Colonic mucosa (tissue), 4 donors: ENCODE measurements at regions of chr22 and their contacts with region 1.

Region 1: GRCh38 chr22:35930933-35931332 is 97.7 kb downstream of the RBFOX2 start:
- DNase-seq: no peak
- H3K4me3 ChIP-seq: no peak overlapping the region
- H3K27ac ChIP-seq: no peak overlapping the region
- H3K4me1 ChIP-seq: no peaks in the 10 kb centered on the region
- H3K27me3 ChIP-seq: no peaks in the 10 kb centered on the region
- CTCF ChIP-seq: peak; percentile 34

Region 2: GRCh38 chr22:35777335-35777975 is 153.5 kb before region 1 on chr22:
- intact Hi-C with region 1: no loop called
- DNase-seq: no peak
- H3K4me3 ChIP-seq: no peak overlapping the region
- H3K27ac ChIP-seq: no peak overlapping the region
- H3K4me1 ChIP-seq: no peaks in the 10 kb centered on the region
- H3K27me3 ChIP-seq: no peaks in the 10 kb centered on the region
- CTCF ChIP-seq: no peak

Region 3: DNA sequence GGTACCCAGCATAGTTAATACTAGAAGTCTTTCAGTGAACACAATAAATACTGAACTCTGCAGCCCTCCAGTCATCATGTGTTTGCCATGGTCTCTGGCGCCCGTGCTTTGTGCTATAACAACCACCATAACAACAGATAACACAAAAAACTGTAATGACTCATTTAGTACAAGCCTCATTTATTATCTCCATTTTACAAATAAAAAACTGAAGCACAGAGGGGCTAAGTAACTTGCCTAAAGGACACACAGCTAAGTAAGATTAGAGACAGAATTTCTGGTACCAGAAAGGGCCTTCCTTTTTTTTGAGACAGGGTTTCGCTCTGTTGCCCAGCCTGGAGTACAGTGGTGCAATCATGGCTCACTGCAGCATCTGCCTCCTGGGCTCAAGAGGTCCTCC is 78.2 kb after region 1 on chr22:
- intact Hi-C with region 1: loop called (anchors 10 kb)
- DNase-seq: no peak
- H3K4me3 ChIP-seq: no peak overlapping the region
- H3K27ac ChIP-seq: no peak overlapping the region
- H3K4me1 ChIP-seq: peaks cover 3% of the 10 kb centered on the region
- H3K27me3 ChIP-seq: no peaks in the 10 kb centered on the region
- CTCF ChIP-seq: no peak

Region 4: DNA sequence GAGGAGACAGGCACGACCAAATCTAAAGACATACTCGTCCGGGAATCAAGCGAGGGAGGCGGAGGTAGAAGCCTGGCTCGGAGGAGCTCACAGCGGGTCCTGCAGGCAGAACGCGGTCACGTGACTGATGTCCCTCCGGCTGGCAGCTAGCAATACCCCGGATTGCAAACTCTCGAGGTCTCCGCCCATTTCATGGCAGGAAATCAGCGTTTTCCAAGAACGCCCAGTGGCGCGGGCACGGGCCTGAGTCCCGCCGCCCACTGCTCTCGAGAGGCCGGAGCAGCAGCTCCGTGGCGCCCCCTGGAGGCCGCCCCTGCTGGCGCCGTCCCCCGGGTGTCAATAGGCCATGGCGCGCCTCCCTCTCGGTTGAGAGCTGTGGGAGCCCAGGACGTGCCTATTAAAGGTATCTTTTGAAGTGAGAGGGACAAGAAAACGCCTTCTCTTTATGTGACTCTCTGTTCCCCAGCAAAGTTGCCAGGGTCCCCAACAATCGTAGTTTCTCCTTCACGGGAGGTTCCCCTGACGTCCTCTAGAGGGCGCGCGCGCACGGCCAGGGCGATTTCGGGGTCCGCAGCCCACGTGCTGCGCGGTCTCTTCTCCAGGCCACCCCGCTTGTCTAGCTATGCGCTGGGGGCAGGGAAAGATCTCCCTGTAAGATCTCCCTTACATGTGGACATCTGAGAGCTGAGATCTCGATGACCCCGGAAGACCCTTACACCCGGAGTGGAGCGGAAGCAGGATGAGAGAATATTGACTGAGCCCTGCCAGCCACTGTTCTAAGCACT is 135.0 kb after region 1 on chr22:
- intact Hi-C with region 1: loop called (anchors 5 kb)
- DNase-seq: peak; percentile 87
- H3K4me3 ChIP-seq: peak overlapping the region; percentile 36
- H3K27ac ChIP-seq: peak overlapping the region; percentile 53
- H3K4me1 ChIP-seq: no peaks in the 10 kb centered on the region
- H3K27me3 ChIP-seq: no peaks in the 10 kb centered on the region
- CTCF ChIP-seq: peak; percentile 100